K562 (cell line): ENCODE measurements at regions of chrX and their contacts with region 1.

Region 1: DNA sequence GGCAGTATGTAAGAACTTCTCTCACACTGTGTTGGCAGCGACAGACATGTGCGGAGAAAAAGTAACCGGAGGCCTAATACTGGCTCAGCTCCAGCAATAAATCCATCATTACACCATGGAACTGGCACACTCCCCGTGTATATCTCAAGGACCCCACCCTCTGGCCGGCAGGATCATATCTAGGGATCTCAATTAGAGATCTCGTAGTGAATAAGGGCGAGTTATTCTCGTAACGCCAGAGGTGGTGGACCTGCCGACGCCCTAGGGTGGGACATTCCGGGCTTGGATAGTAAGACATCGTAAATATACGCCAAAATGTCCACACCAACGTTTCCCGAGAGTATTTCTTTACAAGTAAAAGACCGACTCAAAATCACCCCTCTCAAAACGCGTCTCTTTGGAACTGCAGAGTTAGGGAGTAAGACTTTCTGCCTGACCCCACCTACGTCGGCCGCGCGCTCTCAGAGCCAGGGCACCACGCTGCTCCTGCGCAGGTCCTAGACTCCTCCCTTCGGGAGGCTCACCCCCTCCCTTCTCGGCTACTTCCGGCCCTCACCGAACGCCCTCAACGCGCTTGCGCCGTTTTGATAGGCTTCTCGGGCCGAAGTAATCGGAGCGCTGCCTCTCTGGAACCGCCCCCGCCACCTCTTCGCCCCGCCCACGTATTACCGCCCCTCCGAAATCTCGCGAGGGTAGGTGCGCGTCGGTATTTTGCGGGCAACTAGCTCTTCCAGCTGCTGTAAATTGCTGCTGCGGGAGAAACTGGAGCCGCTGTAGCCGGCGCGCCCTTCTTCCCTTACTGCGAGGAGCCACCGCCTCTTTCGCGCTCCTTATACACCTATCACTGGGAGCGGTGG is at the start of gene WDR44:
- DNase-seq: peak; percentile 92 to 97 (median 94)
- ATAC-seq: peak; percentile 91
- H3K4me3 ChIP-seq: peak within 1 kb of the TSS; percentile 94
- H3K27ac ChIP-seq: peak within 1 kb of the TSS; percentile 97
- H3K4me1 ChIP-seq: peaks cover 7 to 31% of the 10 kb centered on the region in 2 experiments; a peak in 4 of 5 replicates
- H3K27me3 ChIP-seq: no peaks in the 10 kb centered on the region
- CTCF ChIP-seq: no peak
- EP300 ChIP-seq: no peak
- POLR2A ChIP-seq: peak; percentile 89
- RAD21 ChIP-seq: no peak
- polyA plus RNA-seq, gene WDR44: 5.6 to 5.9 TPM

Region 2: GRCh38 chrX:117429501-117429900 is 916.1 kb before region 1 on chrX:
- CTCF ChIA-PET with region 1: no interaction called
- POLR2A ChIA-PET with region 1: no interaction called
- in situ Hi-C with region 1: no loop called
- intact Hi-C with region 1: no loop called
- DNase-seq: no peak
- ATAC-seq: no peak
- H3K4me3 ChIP-seq: no peak overlapping the region
- H3K27ac ChIP-seq: no peak overlapping the region
- H3K4me1 ChIP-seq: no peaks in the 10 kb centered on the region
- H3K27me3 ChIP-seq: no peaks in the 10 kb centered on the region
- CTCF ChIP-seq: no peak
- EP300 ChIP-seq: no peak
- POLR2A ChIP-seq: no peak
- RAD21 ChIP-seq: no peak

Region 3: DNA sequence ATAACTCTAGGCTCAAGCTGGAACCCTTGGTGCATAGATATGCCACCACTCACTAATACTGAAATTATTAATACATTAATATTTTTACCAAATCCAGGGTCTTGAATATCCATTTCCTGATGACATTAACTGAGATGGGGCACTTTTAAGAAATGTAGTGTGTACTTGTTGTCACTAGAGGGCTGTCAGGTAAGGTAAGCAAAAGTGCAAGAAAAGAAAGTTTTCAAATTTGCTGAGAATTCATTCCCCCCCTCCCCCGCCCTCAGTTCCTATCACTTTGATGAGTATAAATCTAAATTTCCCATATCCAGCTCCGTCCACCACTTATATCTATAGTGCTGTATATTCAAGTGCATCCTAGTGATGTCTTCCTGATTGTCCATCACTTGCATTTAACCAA is 20.2 kb before region 1 on chrX:
- CTCF ChIA-PET with region 1: no interaction called
- POLR2A ChIA-PET with region 1: interaction called, 3 read pairs
- in situ Hi-C with region 1: no loop called
- intact Hi-C with region 1: loop called (anchors 2 kb)
- DNase-seq: peak; percentile 14 to 29 (median 20)
- ATAC-seq: peak; percentile 44; the same call in 2 of the 3 replicates
- H3K4me3 ChIP-seq: no peak overlapping the region
- H3K27ac ChIP-seq: no peak overlapping the region
- H3K4me1 ChIP-seq: peaks cover 0 to 7% of the 10 kb centered on the region in 2 experiments; a peak in 3 of 5 replicates
- H3K27me3 ChIP-seq: no peaks in the 10 kb centered on the region
- CTCF ChIP-seq: peak; percentile 20 to 38 (median 34); a peak in 2 of 6 replicates
- EP300 ChIP-seq: no peak
- POLR2A ChIP-seq: no peak
- RAD21 ChIP-seq: peak in 1 of 2 experiments; percentile 39; a peak in 2 of 4 replicates

Region 4: DNA sequence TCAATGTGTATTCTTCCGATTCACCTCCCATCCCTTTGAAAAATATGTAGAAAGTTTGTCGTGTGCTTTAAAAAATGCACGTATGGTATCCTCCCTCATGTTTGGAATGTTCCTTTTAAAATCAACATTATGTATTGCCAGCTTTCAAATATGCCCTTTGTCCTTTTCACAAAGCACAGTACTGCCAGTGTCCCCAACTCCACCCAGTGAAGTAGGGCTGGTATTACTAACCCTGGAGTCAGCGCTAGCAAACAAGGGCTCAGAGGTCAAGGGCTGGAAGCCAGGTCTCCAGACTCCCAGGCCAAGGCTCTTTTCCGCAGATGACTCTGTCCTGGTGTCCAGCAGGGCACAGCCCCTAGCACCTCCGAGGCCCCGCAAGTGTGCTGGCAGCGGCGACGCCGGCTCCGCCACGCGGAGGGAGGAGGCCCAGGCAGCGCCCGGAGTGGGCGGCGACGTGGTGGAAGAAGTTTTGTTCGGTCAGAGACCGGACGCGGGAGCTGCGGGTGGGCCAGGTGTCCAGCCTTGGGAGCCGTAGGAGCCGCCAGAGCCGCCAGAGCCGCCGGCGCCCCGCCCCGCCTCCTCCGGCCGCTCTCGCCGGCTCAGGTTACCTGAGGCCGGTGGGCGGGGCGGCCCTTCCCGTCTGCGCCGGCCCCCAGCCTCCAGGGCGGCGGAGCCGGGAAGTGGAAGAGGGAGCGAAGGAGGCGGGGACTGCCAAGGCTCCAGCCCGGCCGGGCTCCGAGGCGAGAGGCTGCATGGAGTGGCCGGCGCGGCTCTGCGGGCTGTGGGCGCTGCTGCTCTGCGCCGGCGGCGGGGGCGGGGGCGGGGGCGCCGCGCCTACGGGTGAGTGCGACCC is 381.5 kb after region 1 on chrX and contains the start of gene IL13RA1:
- CTCF ChIA-PET with region 1: no interaction called
- POLR2A ChIA-PET with region 1: no interaction called
- in situ Hi-C with region 1: no loop called
- intact Hi-C with region 1: loop called (anchors 10 kb)
- DNase-seq: peak; percentile 88 to 91 (median 88)
- ATAC-seq: peak; percentile 97
- H3K4me3 ChIP-seq: peak within 1 kb of the TSS; percentile 69
- H3K27ac ChIP-seq: peak within 1 kb of the TSS; percentile 74; the same call in 2 of the 3 replicates
- H3K4me1 ChIP-seq: peaks cover 15 to 22% of the 10 kb centered on the region in 2 experiments
- H3K27me3 ChIP-seq: no peaks in the 10 kb centered on the region
- CTCF ChIP-seq: no peak
- EP300 ChIP-seq: no peak
- POLR2A ChIP-seq: peak; percentile 39; the same call in 1 of the 2 replicates
- RAD21 ChIP-seq: no peak
- polyA plus RNA-seq, gene IL13RA1: 2.9 to 3.4 TPM